ENCODE measurements at regions of chr2 and their contacts with region 1.

Region 1: GRCh38 chr2:143259368-143259958 is 130.2 kb downstream of the ARHGAP15 start:
- DNase-seq: peak; percentile 92
- H3K4me3 Mint-ChIP-seq: peak overlapping the region; percentile 80
- H3K27ac Mint-ChIP-seq: peak overlapping the region; percentile 95
- H3K4me1 Mint-ChIP-seq: peaks cover 66% of the 10 kb centered on the region
- H3K27me3 Mint-ChIP-seq: no peaks in the 10 kb centered on the region

Region 2: DNA sequence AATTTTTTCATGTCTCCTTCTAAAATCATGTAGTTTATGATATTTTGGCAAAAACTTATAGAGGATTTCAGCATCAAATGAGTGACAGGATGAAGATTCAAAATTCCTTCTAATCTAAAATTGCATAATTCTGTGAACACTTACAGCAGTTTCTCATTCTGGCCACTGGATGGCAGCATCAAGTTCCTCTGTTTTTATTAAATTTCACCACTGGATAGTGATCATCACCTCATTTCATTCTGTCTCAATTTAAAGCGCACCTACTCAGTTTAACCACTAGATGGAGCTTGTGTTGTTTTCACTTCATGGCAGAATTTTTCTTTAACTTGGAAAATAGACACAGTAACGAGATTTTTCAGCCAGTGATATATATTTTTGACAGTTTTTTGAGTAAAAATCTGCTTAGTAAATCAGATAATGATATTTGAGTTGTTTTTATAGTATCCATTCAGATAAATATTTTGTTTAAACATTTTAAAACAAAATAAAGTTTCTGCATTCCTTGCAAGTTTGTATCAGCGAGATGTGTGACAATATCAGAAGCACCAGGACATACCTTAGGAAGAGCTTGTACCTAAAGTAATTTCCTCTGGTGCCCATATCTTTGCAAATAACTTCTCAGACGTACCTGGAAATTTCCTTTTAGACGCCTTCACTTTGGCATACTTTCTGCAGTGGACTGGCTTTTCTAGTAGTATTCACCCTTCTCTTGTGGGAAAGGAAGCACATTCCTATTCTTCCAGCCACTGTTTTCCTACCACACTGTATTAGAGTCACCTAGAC is 225.0 kb before region 1 on chr2:
- intact Hi-C with region 1: loop called (anchors 1 kb)
- DNase-seq: peak; percentile 88
- H3K4me3 Mint-ChIP-seq: no peak overlapping the region
- H3K27ac Mint-ChIP-seq: no peak overlapping the region
- H3K4me1 Mint-ChIP-seq: peaks cover 11% of the 10 kb centered on the region
- H3K27me3 Mint-ChIP-seq: peaks cover 3% of the 10 kb centered on the region

Region 3: GRCh38 chr2:143128681-143129580 is 130.5 kb before region 1 on chr2 and contains the start of gene ARHGAP15:
- intact Hi-C with region 1: loop called (anchors 1 kb)
- DNase-seq: peak; percentile 90
- H3K4me3 Mint-ChIP-seq: peak within 1 kb of the TSS; percentile 80
- H3K27ac Mint-ChIP-seq: peak within 1 kb of the TSS; percentile 99
- H3K4me1 Mint-ChIP-seq: peaks cover 37% of the 10 kb centered on the region
- H3K27me3 Mint-ChIP-seq: no peaks in the 10 kb centered on the region
- total RNA-seq, gene ARHGAP15: 56.0 and 56.2 TPM in 2 replicates

Region 4: GRCh38 chr2:143205106-143205764 is 54.2 kb before region 1 on chr2:
- intact Hi-C with region 1: loop called (anchors 1 kb)
- DNase-seq: peak; percentile 70
- H3K4me3 Mint-ChIP-seq: peak overlapping the region; percentile 9
- H3K27ac Mint-ChIP-seq: peak overlapping the region; percentile 68
- H3K4me1 Mint-ChIP-seq: peaks cover 47% of the 10 kb centered on the region
- H3K27me3 Mint-ChIP-seq: no peaks in the 10 kb centered on the region

Region 5: GRCh38 chr2:143284087-143284675 is 24.7 kb after region 1 on chr2:
- intact Hi-C with region 1: loop called (anchors 2 kb)
- DNase-seq: peak; percentile 75
- H3K4me3 Mint-ChIP-seq: no peak overlapping the region
- H3K27ac Mint-ChIP-seq: no peak overlapping the region
- H3K4me1 Mint-ChIP-seq: peaks cover 13% of the 10 kb centered on the region
- H3K27me3 Mint-ChIP-seq: no peaks in the 10 kb centered on the region

Region 6: GRCh38 chr2:143705108-143705686 is 445.7 kb after region 1 on chr2:
- intact Hi-C with region 1: loop called (anchors 10 kb)
- DNase-seq: no peak
- H3K4me3 Mint-ChIP-seq: no peak overlapping the region
- H3K27ac Mint-ChIP-seq: peak overlapping the region; percentile 25
- H3K4me1 Mint-ChIP-seq: peaks cover 16% of the 10 kb centered on the region
- H3K27me3 Mint-ChIP-seq: no peaks in the 10 kb centered on the region

Region 7: DNA sequence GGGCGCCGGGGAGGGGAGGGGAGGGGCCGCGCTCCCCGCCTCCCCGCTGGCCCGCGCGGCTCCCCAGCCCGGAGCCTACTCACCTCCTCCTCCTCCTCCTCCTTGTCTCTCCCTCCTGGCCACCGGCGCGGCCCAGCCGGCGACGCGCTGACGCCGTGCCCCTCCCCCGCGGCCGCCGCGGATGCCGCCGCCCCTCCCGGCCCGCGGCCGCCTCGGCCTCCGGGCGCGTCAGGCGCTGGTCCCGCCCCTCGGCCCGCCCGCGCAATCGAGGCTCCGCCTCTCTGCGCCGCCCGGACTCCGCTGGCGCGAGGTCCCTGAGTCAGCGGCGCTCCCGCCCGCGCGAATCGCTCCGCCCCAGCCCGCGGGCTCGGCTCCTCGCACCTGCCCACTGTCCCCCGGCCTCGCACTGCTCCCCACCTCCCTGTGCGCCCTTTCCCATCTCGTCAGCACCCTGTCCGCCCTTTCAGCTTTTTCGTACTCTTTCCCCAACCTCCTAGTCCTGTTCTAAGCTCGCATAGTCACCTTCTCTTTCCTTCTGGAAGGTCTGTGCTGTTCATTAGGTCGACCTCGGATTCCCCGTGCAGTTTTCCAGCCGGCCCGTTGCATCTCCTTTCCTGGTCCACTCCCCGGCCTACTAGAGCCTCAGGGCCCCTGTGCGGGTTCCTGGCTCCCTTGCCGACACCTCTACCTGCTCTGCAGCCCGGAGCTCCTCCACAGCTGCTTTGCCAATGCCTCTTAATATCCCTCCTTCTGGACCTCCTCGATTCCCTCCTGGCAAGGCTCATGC is 1073.1 kb after region 1 on chr2:
- intact Hi-C with region 1: loop called (anchors 10 kb)
- DNase-seq: peak; percentile 98
- H3K4me3 Mint-ChIP-seq: peak overlapping the region; percentile 95
- H3K27ac Mint-ChIP-seq: peak overlapping the region; percentile 90
- H3K4me1 Mint-ChIP-seq: peaks cover 44% of the 10 kb centered on the region
- H3K27me3 Mint-ChIP-seq: peaks cover 6% of the 10 kb centered on the region

Measured in activated CD4-positive, alpha-beta T cell treated with anti-CD3 and anti-CD28 coated beads, Interleukin-2, amount 10 ng/mL, durations not matched to agents 24 days and 14 days (primary cell).